CD8-positive, alpha-beta T cell (primary cell): ENCODE measurements at regions of chr12 and their contacts with region 1.

Region 1: GRCh38 chr12:50283229-50283923 is at the start of gene LIMA1:
- DNase-seq: peak; percentile 84 to 96 (median 93)
- ATAC-seq: peak; percentile 97
- H3K4me3 ChIP-seq: peak within 1 kb of the TSS; percentile 57 to 87
- H3K4me3 Mint-ChIP-seq: peak within 1 kb of the TSS; percentile 93
- H3K27ac ChIP-seq: peak within 1 kb of the TSS; percentile 59 to 69
- H3K27ac Mint-ChIP-seq: peak within 1 kb of the TSS; percentile 93
- H3K4me1 ChIP-seq: peaks cover 19% of the 10 kb centered on the region
- H3K4me1 Mint-ChIP-seq: peaks cover 29% of the 10 kb centered on the region
- H3K27me3 ChIP-seq: no peaks in the 10 kb centered on the region
- H3K27me3 Mint-ChIP-seq: no peaks in the 10 kb centered on the region
- CTCF ChIP-seq: no peak
- total RNA-seq, gene LIMA1: 4.2 TPM

Region 2: DNA sequence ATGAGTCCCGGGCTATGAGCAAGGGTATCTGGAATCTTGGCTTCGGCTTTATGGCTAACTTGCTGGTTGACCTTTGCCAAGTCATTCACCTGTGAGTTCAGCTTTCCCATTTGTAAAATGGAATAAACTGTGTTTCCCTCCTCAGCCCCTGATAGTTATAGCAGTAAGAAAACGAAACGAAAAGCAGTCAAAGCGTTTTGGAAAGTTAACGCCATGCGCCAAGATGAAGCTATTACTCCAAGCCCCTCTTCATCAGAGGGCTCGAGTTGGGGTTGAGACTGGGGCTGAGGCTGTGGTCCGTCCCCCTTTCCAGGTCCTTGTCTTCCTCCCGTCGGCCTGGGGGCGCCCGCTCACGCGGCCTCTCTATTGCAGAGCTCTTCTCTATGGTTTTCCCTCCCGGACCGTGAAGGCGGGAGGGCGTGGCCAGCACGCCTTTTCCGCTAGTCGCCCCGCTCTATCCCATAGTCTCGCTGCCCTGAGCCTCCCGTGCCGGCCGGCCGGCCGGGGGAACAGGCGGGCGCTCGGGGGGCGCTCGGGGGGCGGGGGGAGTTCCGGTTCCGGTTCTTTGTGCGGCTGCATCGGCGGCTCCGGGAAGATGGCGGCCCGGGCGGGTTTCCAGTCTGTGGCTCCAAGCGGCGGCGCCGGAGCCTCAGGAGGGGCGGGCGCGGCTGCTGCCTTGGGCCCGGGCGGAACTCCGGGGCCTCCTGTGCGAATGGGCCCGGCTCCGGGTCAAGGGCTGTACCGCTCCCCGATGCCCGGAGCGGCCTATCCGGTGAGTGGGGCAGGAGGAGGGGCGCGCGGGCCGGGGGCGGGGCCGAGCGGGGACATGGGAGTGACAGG is 198.4 kb before region 1 on chr12 and contains the start of gene SMARCD1:
- CTCF ChIA-PET with region 1: interaction called, 4 read pairs
- POLR2A ChIA-PET with region 1: no interaction called
- intact Hi-C with region 1: loop called (anchors 1 kb)
- DNase-seq: peak; percentile 66 to 94 (median 86)
- ATAC-seq: peak; percentile 81
- H3K4me3 ChIP-seq: peak within 1 kb of the TSS; percentile 87
- H3K4me3 Mint-ChIP-seq: peak within 1 kb of the TSS; percentile 94
- H3K27ac ChIP-seq: peak within 1 kb of the TSS; percentile 90
- H3K27ac Mint-ChIP-seq: peak within 1 kb of the TSS; percentile 98
- H3K4me1 ChIP-seq: peaks cover 10% of the 10 kb centered on the region
- H3K4me1 Mint-ChIP-seq: peaks cover 43% of the 10 kb centered on the region
- H3K27me3 ChIP-seq: no peaks in the 10 kb centered on the region
- H3K27me3 Mint-ChIP-seq: no peaks in the 10 kb centered on the region
- CTCF ChIP-seq: peak; percentile 12
- total RNA-seq, gene SMARCD1: 90.2 to 92.1 TPM

Region 3: DNA sequence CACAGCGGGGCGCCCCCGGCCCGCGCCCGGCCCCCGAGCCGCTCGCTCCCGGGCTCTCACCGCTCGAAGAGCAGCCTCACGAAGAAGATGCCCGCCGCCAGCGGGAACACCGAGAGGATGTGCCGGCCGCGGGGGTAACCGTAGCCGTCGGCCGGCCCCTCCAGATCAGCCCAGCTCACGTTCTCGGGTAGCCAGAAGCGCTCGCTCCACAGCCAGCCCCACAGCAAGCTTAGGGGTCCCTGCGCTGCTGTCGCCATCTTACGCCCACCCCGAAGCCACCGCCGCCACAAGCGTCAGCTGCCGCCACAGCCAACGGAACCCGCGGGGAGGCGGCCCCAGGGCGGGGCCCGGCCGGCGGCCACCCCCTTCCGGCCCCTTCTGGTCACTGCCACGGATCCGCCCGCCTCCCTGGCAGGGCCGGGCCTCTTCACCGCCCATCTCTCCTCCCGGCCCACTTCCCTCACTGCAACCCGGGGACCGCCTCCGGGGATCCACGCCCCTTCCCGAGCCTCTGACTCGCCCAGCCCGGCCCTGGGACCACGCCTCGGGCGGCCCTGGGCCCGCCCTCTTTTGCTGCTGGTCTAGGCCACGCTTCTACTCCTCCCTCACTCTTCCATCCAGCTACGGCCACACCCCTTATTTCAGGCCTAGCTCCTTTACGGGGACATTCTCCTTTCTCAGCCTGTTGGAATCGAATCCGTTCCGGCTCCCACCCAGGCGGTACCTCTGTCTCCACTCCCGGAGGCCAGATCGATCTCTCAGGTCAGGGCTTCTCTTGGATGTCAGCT is 116.1 kb before region 1 on chr12 and contains the start of gene CERS5:
- CTCF ChIA-PET with region 1: no interaction called
- POLR2A ChIA-PET with region 1: no interaction called
- intact Hi-C with region 1: loop called in 1 of 2 experiments (anchors 1 kb)
- DNase-seq: peak; percentile 92 to 98 (median 96)
- ATAC-seq: peak; percentile 95
- H3K4me3 ChIP-seq: peak within 1 kb of the TSS; percentile 85 to 90
- H3K4me3 Mint-ChIP-seq: peak within 1 kb of the TSS; percentile 92
- H3K27ac ChIP-seq: peak within 1 kb of the TSS; percentile 88 to 93
- H3K27ac Mint-ChIP-seq: peak within 1 kb of the TSS; percentile 95
- H3K4me1 ChIP-seq: peaks cover 15% of the 10 kb centered on the region
- H3K4me1 Mint-ChIP-seq: peaks cover 29% of the 10 kb centered on the region
- H3K27me3 ChIP-seq: no peaks in the 10 kb centered on the region
- H3K27me3 Mint-ChIP-seq: no peaks in the 10 kb centered on the region
- CTCF ChIP-seq: no peak
- total RNA-seq, gene CERS5: 45.2 to 46.2 TPM

Region 4: DNA sequence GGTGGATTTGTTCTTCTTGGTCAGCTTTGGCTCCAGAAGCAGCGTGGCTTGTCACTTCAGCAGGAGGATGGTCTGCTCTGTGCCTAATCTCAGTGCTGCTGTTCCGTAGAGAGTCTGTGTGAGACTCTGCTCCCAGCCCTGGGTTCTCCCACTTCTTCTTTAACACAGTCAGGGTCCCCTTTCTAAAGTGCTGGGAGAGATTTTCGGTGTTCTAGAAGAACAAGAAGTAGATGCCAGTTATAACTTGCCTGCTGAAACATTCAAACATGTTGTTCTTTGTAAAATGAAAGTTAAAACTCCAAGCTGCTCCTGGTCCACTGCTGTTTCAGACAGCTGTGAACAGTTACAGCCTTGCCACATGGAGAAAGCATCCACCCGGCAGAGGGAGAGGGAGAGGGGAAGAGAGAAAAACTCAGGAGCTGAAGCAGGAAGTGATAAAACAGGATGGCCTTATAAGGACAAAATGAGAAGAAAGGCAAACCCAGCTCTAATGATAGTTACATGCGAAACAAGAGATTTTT is 61.0 kb before region 1 on chr12:
- CTCF ChIA-PET with region 1: interaction called, 4 read pairs
- POLR2A ChIA-PET with region 1: interaction called, 7 read pairs
- intact Hi-C with region 1: loop called (anchors 2 kb)
- DNase-seq: peak in 3 of 9 experiments; percentile 47 to 67 (median 56)
- ATAC-seq: peak; percentile 56
- H3K4me3 ChIP-seq: peak overlapping the region; percentile 56 to 68
- H3K4me3 Mint-ChIP-seq: no peak overlapping the region
- H3K27ac ChIP-seq: peak overlapping the region; percentile 46 to 84
- H3K27ac Mint-ChIP-seq: no peak overlapping the region
- H3K4me1 ChIP-seq: peaks cover 27% of the 10 kb centered on the region
- H3K4me1 Mint-ChIP-seq: peaks cover 33% of the 10 kb centered on the region
- H3K27me3 ChIP-seq: no peaks in the 10 kb centered on the region
- H3K27me3 Mint-ChIP-seq: no peaks in the 10 kb centered on the region
- CTCF ChIP-seq: no peak

Region 5: GRCh38 chr12:51951199-51951842 is 1667.9 kb after region 1 on chr12 and contains the start of gene ACVR1B:
- CTCF ChIA-PET with region 1: no interaction called
- POLR2A ChIA-PET with region 1: no interaction called
- intact Hi-C with region 1: loop called in 1 of 2 experiments (anchors 10 kb)
- DNase-seq: peak; percentile 84 to 95 (median 91)
- ATAC-seq: peak; percentile 95
- H3K4me3 ChIP-seq: peak within 1 kb of the TSS; percentile 76 to 93
- H3K4me3 Mint-ChIP-seq: peak within 1 kb of the TSS; percentile 98
- H3K27ac ChIP-seq: peak within 1 kb of the TSS; percentile 44 to 69
- H3K27ac Mint-ChIP-seq: peak within 1 kb of the TSS; percentile 91
- H3K4me1 ChIP-seq: peaks cover 38% of the 10 kb centered on the region
- H3K4me1 Mint-ChIP-seq: peaks cover 42% of the 10 kb centered on the region
- H3K27me3 ChIP-seq: no peaks in the 10 kb centered on the region
- H3K27me3 Mint-ChIP-seq: no peaks in the 10 kb centered on the region
- CTCF ChIP-seq: no peak
- total RNA-seq, gene ACVR1B: 12.0 to 13.7 TPM